Natural killer cell (primary cell): ENCODE measurements at regions of chr17 and their contacts with region 1.

Region 1: DNA sequence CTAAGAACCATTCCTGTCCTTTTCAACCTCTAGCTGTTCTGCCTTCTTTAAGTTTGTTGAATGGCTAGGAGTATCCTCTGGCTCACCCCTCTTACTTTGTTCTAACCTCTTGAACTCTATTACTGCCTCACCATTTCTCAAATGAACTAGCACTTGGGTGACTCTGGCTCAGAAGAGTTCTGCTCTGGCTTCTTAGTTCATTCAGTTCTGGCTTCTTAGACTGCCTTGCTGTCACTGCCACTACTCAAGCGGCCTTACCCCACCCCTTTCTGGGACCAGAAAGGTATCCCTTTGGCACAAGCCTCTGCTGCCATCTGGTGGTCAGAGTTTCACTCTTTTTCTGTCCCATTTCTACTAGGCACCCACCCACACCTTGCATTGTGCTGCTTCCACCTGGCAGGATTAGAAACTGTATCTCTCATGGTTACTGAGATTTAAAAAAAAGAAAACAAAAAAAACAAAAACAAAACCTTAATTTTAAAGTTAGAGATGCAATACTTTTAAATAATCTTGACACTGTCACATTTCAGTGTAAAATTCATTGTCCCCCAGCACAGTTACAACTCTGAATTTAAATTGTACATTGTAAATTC is 6.8 kb upstream of the ABCA10 start:
- DNase-seq: peak; percentile 53 to 73
- ATAC-seq: peak; percentile 72 to 86 (median 80)
- H3K4me3 ChIP-seq: no peak overlapping the region
- H3K4me3 Mint-ChIP-seq: no peak overlapping the region
- H3K27ac ChIP-seq: no peak overlapping the region
- H3K27ac Mint-ChIP-seq: no peak overlapping the region
- H3K4me1 ChIP-seq: no peaks in the 10 kb centered on the region
- H3K4me1 Mint-ChIP-seq: peaks cover 0 to 4% of the 10 kb centered on the region in 2 donors
- H3K27me3 ChIP-seq: no peaks in the 10 kb centered on the region
- H3K27me3 Mint-ChIP-seq: no peaks in the 10 kb centered on the region
- CTCF ChIP-seq: peak; percentile 81

Region 2: DNA sequence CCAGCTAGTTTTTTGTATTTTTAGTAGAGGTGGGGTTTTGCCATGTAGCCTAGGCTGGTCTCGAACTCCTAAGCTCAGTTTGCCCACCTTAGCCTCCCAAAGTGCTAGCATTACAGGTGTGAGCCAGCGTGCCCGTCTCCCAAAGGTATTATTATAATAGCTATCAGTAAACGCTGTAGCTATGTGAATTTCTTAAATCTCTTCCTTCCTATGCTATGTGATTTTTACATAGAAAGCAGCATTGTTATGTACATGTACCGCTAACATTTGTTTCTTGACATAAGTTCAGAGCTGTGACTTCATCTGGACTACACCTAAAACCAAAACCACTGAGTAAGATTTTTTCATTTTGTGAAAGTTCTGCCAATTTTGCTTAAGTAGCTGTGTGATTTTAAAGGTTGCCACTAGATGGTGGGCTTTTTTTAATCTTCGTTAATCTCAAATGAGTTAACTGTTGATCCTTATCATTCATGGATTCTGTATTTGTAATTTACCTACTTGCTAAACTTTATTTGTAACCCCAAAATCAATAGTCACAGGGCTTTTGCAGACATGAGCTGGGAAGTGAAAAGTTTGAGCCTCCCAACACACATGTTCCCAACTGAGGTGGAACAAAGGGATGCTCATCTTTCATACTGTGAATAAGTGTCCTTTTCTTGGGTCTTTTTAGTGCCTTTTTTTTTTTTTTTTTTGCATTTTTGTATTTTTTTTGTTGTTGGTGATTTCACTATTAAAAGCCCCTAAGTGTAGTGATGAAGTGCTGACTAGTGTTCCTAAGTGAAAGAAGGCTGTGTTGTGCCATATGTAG is 701.3 kb before region 1 on chr17:
- intact Hi-C with region 1: loop called (anchors 5 kb)
- DNase-seq: peak in 1 of 2 donors; percentile 12
- ATAC-seq: peak in 2 of 3 donors; percentile 59 to 67
- H3K4me3 ChIP-seq: no peak overlapping the region
- H3K4me3 Mint-ChIP-seq: no peak overlapping the region
- H3K27ac ChIP-seq: no peak overlapping the region
- H3K27ac Mint-ChIP-seq: peak overlapping the region; percentile 67 to 77
- H3K4me1 ChIP-seq: no peaks in the 10 kb centered on the region
- H3K4me1 Mint-ChIP-seq: peaks cover 15 to 17% of the 10 kb centered on the region in 2 donors
- H3K27me3 ChIP-seq: no peaks in the 10 kb centered on the region
- H3K27me3 Mint-ChIP-seq: no peaks in the 10 kb centered on the region
- CTCF ChIP-seq: peak; percentile 20